Activated CD4-positive, alpha-beta memory T cell treated with anti-CD3 and anti-CD28 coated beads for 36 hours (primary cell): ENCODE measurements at regions of chr10 and their contacts with region 1.

Region 1: DNA sequence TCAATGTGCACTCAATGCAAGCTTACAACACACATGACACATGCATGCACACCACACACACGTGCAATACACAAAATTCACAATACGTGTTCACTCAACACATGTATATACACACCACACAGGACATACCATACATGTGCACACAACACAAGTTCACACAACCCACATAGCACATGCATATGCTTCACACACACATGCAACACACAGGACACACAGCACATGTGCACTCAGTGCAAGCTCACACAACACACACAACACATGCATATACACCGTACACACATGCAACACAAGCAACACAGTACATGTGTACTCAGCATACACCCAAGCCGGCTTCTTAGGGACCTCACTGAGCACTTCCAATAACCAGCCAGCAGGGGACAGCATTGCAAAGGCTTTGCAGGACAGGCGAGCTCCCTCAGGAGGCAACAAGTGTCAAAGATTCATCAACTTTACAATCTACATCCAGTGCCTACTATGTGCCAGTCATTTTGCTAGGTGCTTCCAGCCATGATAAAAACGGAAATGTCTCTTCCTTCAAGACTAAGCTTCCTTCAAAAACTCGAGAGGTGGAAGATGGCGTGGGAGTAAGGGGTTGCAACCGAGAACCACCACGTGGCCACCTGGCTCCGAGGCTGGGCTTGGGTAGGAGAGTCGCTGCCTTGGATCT is 61.1 kb downstream of the JCAD start:
- DNase-seq: peak; percentile 83
- H3K4me3 Mint-ChIP-seq: no peak overlapping the region
- H3K27ac Mint-ChIP-seq: no peak overlapping the region
- H3K4me1 Mint-ChIP-seq: peaks cover 5% of the 10 kb centered on the region
- H3K27me3 Mint-ChIP-seq: peaks cover 53% of the 10 kb centered on the region

Region 2: DNA sequence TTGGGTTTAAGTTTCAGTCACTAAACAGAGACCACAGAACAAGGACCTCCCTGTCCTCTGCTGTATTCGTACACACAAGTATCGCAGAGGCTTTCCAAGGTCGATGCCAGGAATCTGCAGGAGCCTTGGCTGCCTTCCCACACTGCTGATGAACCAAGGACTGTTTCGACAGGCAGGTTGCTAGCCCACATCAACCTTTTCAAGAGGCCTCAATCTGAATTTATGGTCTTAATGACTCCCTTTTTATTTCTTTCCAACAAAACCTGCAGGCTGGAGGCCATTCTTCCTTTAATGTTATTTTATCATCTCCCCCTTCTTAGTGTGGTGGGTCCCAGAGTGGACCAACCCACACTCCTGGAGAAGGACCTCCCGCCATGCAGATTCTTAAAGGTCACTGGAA is 15.5 kb after region 1 on chr10:
- CTCF ChIA-PET with region 1: interaction called, 23 read pairs
- POLR2A ChIA-PET with region 1: no interaction called
- intact Hi-C with region 1: no loop called
- DNase-seq: no peak
- H3K4me3 Mint-ChIP-seq: no peak overlapping the region
- H3K27ac Mint-ChIP-seq: no peak overlapping the region
- H3K4me1 Mint-ChIP-seq: peaks cover 5% of the 10 kb centered on the region
- H3K27me3 Mint-ChIP-seq: peaks cover 36% of the 10 kb centered on the region

Region 3: DNA sequence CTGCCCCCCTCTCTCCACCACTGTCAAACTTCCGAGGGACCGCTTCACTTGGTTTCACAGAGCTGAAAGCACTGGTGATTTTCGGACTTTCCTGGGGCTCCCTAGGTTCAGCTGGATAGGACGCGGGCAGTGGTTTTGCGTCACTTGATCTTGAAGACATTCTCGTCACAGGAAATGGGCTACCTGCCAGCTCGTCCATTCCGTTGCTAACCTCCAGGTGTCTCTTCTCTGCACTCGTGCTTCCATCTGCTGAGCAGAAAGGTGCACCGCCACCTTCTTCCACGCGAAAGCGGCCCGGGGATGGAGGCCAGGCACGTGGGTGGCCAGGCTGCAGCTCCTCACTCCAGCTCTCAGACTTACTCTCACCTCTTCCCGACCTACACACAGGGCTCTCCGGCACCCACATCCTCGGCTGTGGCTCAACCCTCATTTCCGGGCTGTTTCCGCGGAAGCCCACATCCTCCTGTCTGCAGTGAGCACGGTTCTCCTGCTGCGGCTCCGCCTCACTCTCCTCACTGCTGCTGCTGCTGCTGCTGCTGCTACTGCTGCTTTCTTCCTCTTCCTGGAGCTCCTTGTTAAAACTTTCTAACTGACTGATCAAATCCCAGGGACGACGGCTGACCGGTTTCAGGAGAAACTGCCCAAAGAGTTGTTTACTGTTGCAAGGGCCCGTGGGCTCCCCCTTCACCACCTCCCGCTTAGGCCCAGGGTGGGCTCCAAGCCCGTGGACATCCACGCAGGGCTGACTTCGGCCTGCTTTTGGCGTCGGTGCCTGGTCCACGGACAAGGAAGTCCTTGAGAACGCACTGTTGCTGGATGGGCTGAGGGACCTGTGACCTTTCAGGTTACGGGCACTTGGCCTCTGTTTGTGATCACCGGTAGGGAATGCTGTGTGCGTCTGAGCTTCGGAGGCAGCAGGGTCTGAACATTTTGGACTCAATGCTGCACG is 29.1 kb after region 1 on chr10:
- CTCF ChIA-PET with region 1: interaction called, 13 read pairs
- POLR2A ChIA-PET with region 1: interaction called, 3 read pairs
- intact Hi-C with region 1: loop called (anchors 1 kb)
- DNase-seq: peak; percentile 95
- H3K4me3 Mint-ChIP-seq: peak overlapping the region; percentile 67
- H3K27ac Mint-ChIP-seq: peak overlapping the region; percentile 65
- H3K4me1 Mint-ChIP-seq: peaks cover 40% of the 10 kb centered on the region
- H3K27me3 Mint-ChIP-seq: peaks cover 47% of the 10 kb centered on the region

Region 4: GRCh38 chr10:30241422-30242110 is 243.3 kb after region 1 on chr10:
- CTCF ChIA-PET with region 1: interaction called, 18 read pairs
- POLR2A ChIA-PET with region 1: no interaction called
- intact Hi-C with region 1: loop called (anchors 1 kb)
- DNase-seq: no peak
- H3K4me3 Mint-ChIP-seq: no peak overlapping the region
- H3K27ac Mint-ChIP-seq: no peak overlapping the region
- H3K4me1 Mint-ChIP-seq: no peaks in the 10 kb centered on the region
- H3K27me3 Mint-ChIP-seq: peaks cover 12% of the 10 kb centered on the region

Region 5: DNA sequence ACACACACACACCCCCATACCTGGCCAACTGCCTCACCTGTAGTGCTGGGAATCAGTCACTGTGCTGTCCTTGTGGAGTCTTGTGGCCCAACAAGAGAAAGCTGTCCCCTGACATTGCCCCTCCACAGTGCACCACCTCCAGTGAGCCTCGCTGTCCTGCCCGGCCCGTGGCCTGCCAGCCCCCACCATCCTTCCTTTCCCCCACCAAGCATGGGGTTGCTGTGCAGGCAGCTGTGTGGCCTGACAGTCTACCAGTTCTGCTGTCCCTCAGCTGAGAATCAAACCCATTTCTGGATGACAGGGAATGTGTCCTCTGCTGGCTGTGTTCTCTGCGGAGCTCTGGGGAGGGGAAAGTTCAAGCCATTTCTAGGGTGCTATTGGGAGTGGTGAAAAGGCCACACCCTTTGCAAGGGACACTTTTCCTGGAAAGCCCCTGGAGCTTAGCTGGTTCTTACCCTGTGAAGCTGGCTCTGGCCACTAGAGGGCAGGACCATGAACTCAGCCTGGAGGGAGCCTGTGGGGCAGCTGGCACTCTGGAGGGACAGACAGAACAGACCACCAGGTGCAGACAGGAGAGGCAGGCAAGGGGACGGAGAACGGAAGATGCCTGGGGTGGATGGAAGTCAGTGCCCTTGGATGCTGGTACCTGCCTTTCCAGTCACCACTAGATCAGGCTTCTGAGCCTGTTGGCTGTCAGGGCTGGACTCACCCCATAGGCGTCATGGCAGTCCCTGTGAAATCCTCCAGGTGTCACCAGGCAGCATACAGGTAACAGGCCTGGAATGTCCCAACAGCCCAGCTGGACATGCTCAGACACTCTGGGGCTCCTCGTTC is 361.3 kb after region 1 on chr10:
- CTCF ChIA-PET with region 1: interaction called, 16 read pairs
- POLR2A ChIA-PET with region 1: no interaction called
- intact Hi-C with region 1: no loop called
- DNase-seq: peak; percentile 78
- H3K4me3 Mint-ChIP-seq: no peak overlapping the region
- H3K27ac Mint-ChIP-seq: no peak overlapping the region
- H3K4me1 Mint-ChIP-seq: peaks cover 4% of the 10 kb centered on the region
- H3K27me3 Mint-ChIP-seq: no peaks in the 10 kb centered on the region

Region 6: DNA sequence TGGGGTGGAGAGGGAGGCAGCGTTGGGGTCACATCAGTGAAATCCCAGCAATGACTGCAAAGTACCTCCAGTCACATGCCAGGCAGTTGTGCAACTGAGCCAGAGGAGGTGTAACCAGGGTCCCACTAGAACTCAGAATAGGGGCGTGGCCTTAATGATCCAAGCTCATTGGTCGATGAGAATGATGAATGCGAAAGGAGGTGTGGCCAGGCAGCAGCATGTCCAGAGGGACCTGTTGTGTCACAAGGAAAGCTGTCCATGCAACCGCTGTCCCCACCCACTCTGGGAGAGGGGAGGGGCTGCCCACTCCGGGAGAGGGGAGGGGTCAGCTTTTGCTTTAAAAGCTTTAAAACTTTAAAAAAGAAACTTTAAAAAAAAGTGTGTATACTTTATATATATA is 376.1 kb after region 1 on chr10:
- CTCF ChIA-PET with region 1: no interaction called
- POLR2A ChIA-PET with region 1: no interaction called
- intact Hi-C with region 1: loop called (anchors 10 kb)
- DNase-seq: no peak
- H3K4me3 Mint-ChIP-seq: no peak overlapping the region
- H3K27ac Mint-ChIP-seq: peak overlapping the region; percentile 73
- H3K4me1 Mint-ChIP-seq: peaks cover 25% of the 10 kb centered on the region
- H3K27me3 Mint-ChIP-seq: peaks cover 1% of the 10 kb centered on the region

Region 7: GRCh38 chr10:30671026-30671616 is 672.8 kb after region 1 on chr10:
- CTCF ChIA-PET with region 1: no interaction called
- POLR2A ChIA-PET with region 1: no interaction called
- intact Hi-C with region 1: no loop called
- DNase-seq: no peak
- H3K4me3 Mint-ChIP-seq: peak overlapping the region; percentile 49
- H3K27ac Mint-ChIP-seq: peak overlapping the region; percentile 52
- H3K4me1 Mint-ChIP-seq: peaks cover 31% of the 10 kb centered on the region
- H3K27me3 Mint-ChIP-seq: peaks cover 17% of the 10 kb centered on the region